ENCODE measurements at regions of chr4 and their contacts with region 1.

Region 1: GRCh38 chr4:80266253-80266901 is at the start of gene FGF5:
- DNase-seq: peak; percentile 75
- H3K4me3 ChIP-seq: peak within 1 kb of the TSS; percentile 92
- CTCF ChIP-seq: no peak

Region 2: DNA sequence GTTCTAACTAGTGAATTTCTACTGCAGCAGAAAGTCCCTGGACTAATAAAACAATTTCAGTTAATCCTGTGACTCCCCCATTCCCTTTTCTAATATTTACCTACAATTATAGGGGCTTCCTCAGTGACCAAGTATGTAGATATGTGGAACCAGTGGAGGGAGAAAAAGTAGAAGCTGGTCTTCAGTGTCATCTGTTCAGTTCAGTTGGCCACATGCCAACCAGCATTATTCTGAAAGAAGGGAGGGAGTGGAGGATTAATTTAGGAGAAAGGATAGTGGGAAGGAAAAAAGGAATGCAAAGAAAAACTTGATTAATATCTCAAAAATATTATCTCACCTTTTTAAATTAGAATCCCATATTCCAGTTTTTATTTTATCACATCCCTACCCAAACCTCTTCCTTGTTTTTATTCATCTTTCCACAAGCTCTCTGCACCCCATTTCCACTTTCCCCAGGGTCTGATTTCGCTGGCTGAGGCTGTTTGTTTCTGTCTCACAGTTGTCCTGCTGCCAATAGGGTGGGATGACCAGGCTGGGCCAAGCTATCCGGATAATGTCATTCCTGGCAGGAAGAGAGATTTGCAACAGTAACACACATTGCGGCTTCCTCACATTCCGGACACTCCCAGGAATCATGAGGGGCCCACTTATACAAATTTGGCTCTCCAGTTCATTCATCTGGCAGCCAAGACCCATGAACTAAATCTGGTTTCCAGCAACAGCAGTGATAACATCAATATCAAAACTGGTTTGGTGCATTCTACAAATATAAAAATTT is 168.8 kb before region 1 on chr4:
- CTCF ChIA-PET with region 1: no interaction called
- POLR2A ChIA-PET with region 1: no interaction called
- DNase-seq: no peak
- H3K4me3 ChIP-seq: no peak overlapping the region
- CTCF ChIP-seq: no peak

Region 3: DNA sequence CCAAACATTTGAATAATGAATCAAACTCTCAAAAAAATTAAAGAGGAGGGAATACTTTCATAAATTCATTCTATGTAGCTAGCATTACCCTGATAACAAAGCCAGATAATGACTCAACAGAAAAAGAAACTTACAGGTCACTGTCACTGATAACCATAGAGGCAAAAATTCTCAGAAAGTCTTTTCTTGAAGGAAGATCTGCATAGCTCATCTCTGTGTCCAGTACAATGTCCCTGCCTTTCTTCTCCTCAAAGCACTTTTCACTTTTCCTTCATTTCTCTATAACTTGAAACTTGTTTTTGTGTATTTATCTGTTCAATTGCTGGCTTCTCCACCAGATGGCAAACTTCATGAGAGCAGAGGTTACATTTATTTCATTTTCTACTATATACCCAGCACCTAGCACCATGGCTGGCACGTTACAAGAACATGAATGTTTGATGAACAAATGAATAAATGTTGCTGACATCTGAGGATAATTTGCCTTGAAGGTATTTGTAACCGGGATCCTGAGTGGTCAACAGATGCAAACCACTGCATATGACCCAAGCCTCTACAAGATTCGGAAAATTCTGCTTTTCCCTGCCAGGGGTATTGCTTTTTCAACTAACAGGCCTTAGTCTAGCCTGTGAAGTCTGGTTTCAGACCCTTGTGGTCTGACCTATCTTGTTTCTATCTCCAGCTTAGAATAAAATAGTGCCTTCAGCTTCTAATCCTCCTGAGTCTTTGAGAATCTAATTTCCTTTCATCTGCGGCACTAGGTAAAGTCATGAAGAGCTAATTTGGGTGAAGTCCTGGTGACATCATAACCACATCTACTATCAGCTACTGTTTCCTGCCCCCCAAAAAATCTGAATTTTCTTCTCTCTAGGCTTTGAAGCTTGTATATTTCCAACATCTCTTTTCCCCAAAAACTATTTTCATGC is 140.9 kb before region 1 on chr4:
- CTCF ChIA-PET with region 1: no interaction called
- POLR2A ChIA-PET with region 1: no interaction called
- DNase-seq: no peak
- H3K4me3 ChIP-seq: no peak overlapping the region
- CTCF ChIP-seq: peak; percentile 42

Region 4: DNA sequence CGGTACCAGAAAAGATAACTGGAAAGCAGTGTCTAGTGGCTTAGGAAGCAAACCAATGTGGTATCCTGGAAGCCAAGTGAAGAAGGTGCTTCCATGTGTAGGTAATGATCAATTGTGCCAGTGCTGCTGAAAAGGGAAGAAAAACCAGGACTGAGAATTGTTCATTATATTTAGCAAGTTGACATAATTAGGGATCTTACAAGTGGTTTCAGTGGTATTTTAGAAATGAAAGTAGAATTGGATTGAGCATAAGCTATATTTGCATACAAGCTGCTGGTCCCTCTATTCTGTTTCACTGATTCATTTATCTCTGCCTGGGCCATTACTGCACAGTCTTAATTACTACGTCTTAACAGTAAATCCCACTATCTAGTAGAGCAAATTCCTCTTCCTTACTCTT is 36.8 kb before region 1 on chr4:
- CTCF ChIA-PET with region 1: interaction called, 3 read pairs
- POLR2A ChIA-PET with region 1: interaction called, 12 read pairs
- DNase-seq: no peak
- H3K4me3 ChIP-seq: no peak overlapping the region
- CTCF ChIP-seq: no peak

Region 5: GRCh38 chr4:80237992-80238391 is 28.4 kb before region 1 on chr4:
- CTCF ChIA-PET with region 1: interaction called, 4 read pairs
- POLR2A ChIA-PET with region 1: interaction called, 15 read pairs
- DNase-seq: peak; percentile 87
- H3K4me3 ChIP-seq: peak overlapping the region; percentile 23; the same call in 1 of the 2 replicates
- CTCF ChIP-seq: no peak

Region 6: GRCh38 chr4:80255329-80256095 is 10.9 kb before region 1 on chr4:
- CTCF ChIA-PET with region 1: interaction called, 16 read pairs
- POLR2A ChIA-PET with region 1: interaction called, 43 read pairs
- DNase-seq: no peak
- H3K4me3 ChIP-seq: peak overlapping the region; percentile 29
- CTCF ChIP-seq: no peak

Region 7: DNA sequence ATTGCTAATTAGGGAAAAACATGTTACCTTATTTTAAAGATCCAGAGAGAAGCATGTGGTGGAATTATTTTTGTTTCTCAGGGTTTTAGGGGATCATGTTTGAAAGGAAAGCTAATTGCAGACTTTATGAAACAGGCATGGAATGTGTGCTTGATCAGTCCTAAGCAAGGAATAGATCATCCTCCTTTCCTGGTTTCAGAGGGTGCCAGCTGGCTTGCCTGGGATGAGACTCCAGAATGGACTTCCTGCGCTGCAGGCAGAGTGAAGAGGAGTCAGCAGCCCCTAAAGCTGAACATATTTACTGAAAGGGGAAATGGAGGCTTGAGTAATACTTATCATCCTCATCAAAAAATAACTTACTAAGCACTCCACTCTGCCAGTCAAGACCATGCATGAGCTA is 13.4 kb after region 1 on chr4:
- CTCF ChIA-PET with region 1: interaction called, 9 read pairs
- POLR2A ChIA-PET with region 1: interaction called, 14 read pairs
- DNase-seq: no peak
- H3K4me3 ChIP-seq: no peak overlapping the region
- CTCF ChIP-seq: no peak

Region 8: DNA sequence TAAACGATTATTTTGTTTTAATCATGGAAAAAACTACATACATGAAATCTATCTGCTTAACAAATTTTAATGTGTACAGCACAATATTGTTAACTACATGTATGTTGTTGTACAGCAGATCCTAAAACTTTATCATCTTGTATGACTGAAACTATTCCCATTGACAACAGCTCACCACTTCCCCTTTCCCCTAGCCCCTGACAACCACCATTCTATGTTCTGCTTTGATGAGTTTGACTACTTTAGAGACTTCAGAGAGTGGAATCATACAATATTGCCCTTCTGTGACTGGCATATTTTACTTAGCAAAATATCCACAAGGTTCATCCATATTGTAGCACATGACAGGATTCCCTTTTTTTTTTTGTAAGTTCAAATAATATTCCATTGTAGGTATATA is 255.1 kb after region 1 on chr4:
- CTCF ChIA-PET with region 1: no interaction called
- POLR2A ChIA-PET with region 1: no interaction called
- DNase-seq: no peak
- H3K4me3 ChIP-seq: no peak overlapping the region
- CTCF ChIP-seq: no peak

Measured in AG04449 (cell line).